Right cardiac atrium (tissue), 5 donors: ENCODE measurements at regions of chr18 and their contacts with region 1.

Region 1: GRCh38 chr18:36114301-36114700 is 14.8 kb downstream of the SLC39A6 start:
- DNase-seq: no peak
- ATAC-seq: no peak
- H3K4me3 ChIP-seq: no peak overlapping the region
- H3K27ac ChIP-seq: no peak overlapping the region
- H3K4me1 ChIP-seq: no peaks in the 10 kb centered on the region
- H3K27me3 ChIP-seq: no peaks in the 10 kb centered on the region

Region 2: GRCh38 chr18:36083729-36084128 is 30.6 kb before region 1 on chr18:
- intact Hi-C with region 1: loop called in 1 of 4 experiments (anchors 5 kb)
- DNase-seq: no peak
- ATAC-seq: no peak
- H3K4me3 ChIP-seq: no peak overlapping the region
- H3K27ac ChIP-seq: no peak overlapping the region
- H3K4me1 ChIP-seq: no peaks in the 10 kb centered on the region
- H3K27me3 ChIP-seq: no peaks in the 10 kb centered on the region

Region 3: DNA sequence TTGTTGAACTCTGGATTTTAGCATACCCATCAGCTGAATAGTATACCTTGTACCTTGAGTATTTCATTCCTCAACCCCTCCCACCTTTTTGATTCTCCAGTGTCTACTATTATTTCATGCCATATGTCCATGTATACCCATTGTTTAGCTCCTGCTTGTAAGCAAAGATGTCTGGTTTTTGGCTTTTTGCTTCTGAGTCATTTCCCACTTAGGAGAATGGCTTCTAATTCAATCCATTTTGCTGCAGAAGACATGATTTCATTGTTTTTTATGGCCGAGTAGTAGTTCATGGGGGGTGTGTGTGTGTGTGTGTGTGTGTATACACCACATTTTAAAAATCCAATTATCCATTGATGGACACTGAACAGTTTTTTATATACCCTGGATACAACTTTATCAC is 48.7 kb after region 1 on chr18:
- intact Hi-C with region 1: loop called in 1 of 4 experiments (anchors 10 kb)
- DNase-seq: no peak
- ATAC-seq: no peak
- H3K4me3 ChIP-seq: no peak overlapping the region
- H3K27ac ChIP-seq: no peak overlapping the region
- H3K4me1 ChIP-seq: no peaks in the 10 kb centered on the region
- H3K27me3 ChIP-seq: no peaks in the 10 kb centered on the region

Region 4: DNA sequence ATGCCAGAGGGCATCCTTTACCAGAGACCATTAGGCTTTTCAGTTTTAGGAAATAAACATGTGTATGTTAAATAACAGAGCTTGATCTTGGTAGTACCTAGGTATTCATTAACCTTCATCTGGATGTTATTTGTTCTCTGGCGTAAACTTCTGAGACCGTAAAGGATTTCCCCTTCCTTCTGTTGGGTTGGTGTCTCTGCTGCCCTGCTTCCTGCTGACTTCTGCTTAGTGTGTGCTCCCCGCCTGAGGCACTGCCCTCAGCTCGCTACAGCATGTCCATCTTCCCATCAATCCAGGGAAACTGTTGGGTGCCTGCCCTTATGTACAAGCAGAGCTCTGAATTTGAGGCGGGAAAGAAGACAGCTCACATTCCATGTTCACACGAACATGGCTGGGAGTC is 536.6 kb after region 1 on chr18:
- intact Hi-C with region 1: no loop called
- DNase-seq: no peak
- ATAC-seq: no peak
- H3K4me3 ChIP-seq: no peak overlapping the region
- H3K27ac ChIP-seq: no peak overlapping the region
- H3K4me1 ChIP-seq: no peaks in the 10 kb centered on the region
- H3K27me3 ChIP-seq: no peaks in the 10 kb centered on the region